Uterus (tissue), 4 donors: ENCODE measurements at regions of chr9 and their contacts with region 1.

Region 1: DNA sequence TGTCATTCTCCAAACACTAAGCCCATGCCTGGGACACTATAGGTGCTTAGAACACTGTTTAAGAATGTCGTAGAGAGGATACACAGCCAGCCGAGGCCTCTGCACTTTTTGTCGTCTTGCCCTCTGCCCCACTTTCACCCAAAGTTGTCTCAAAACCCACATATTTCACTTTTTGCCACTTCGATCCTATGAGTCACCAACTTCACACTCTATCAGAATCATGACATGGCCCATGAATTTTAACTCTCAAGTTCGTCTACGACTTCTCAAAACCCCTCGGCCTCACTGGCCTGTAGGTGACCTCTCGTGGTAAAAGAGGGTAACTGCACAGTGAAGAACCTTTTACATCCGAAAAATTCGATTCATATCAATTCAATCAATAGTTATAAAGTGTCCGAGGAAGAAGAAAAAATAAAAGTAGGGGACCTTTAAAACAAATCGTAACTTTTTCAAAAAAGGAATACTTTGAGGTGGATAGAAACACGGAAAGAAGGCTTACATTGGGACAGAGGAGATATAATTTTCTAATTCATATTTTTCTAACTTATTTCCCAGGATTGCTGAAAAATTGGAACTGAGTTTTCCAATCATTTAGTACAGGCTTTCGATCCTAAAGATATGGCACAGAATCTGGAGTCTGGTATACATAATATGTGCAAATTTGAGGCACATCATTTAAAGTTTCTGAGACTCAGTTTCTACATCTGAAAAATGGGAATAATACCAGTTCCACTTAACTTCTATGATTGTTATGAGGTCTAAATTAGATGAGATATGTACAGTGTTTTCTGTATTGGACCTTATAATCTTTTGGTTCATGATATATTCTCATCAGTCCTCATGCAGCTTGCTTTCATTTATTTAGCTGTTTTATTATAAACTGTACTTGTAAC is 122.6 kb downstream of the APBA1 start:
- DNase-seq: no peak
- H3K4me3 ChIP-seq: no peak overlapping the region
- H3K27ac ChIP-seq: no peak overlapping the region
- H3K4me1 ChIP-seq: no peaks in the 10 kb centered on the region
- H3K27me3 ChIP-seq: no peaks in the 10 kb centered on the region
- CTCF ChIP-seq: peak; percentile 67 to 76 (median 70)
- POLR2A ChIP-seq: no peak

Region 2: GRCh38 chr9:69421908-69422801 is 127.4 kb before region 1 on chr9:
- intact Hi-C with region 1: loop called (anchors 10 kb)
- DNase-seq: peak; percentile 47 to 56
- H3K4me3 ChIP-seq: no peak overlapping the region
- H3K27ac ChIP-seq: no peak overlapping the region
- H3K4me1 ChIP-seq: no peaks in the 10 kb centered on the region
- H3K27me3 ChIP-seq: no peaks in the 10 kb centered on the region
- CTCF ChIP-seq: peak; percentile 78 to 84 (median 80)
- POLR2A ChIP-seq: no peak

Region 3: GRCh38 chr9:69599232-69599971 is 49.8 kb after region 1 on chr9:
- intact Hi-C with region 1: no loop called
- DNase-seq: no peak
- H3K4me3 ChIP-seq: no peak overlapping the region
- H3K27ac ChIP-seq: no peak overlapping the region
- H3K4me1 ChIP-seq: no peaks in the 10 kb centered on the region
- H3K27me3 ChIP-seq: no peaks in the 10 kb centered on the region
- CTCF ChIP-seq: no peak
- POLR2A ChIP-seq: no peak

Region 4: DNA sequence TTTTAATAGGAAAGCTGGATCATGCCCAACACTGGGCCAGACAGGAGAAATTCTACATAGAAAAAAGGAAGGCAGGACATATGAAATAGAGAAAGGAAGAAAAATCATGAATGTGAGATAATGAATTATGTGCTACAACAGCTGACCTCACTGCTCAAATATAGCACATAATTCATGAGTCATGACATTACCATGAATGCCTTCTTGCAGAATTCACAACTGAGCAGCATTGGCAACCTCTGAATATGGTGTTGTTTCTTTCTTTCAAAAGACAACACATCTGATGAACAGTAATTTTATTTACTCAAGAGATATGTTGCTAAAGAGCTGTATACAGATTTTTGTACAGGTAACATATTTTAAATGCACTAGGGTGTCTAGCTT is 88.3 kb after region 1 on chr9:
- intact Hi-C with region 1: no loop called
- DNase-seq: no peak
- H3K4me3 ChIP-seq: no peak overlapping the region
- H3K27ac ChIP-seq: no peak overlapping the region
- H3K4me1 ChIP-seq: no peaks in the 10 kb centered on the region
- H3K27me3 ChIP-seq: no peaks in the 10 kb centered on the region
- CTCF ChIP-seq: no peak
- POLR2A ChIP-seq: no peak

Region 5: DNA sequence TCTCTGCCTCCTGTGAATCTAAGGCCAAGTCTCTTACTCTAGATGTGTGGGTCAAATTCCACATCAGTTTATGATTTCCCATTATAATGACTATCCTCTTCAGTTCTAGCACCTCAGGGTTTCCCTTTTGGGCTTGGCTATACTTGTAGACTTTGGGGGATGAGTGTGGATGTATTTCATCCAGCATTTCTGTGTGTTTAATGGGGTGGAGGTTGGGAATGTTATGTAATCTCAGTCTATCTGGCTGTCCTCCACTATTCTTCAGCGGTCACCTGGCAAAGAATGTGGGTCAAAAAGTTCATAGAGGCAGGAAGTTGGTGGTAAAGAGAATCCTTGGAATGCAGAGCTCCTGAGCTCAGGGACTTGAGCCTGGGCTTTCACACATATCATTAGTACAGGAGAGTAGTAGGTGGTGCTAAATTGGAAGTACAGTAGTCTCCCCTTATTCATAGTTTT is 335.9 kb after region 1 on chr9:
- intact Hi-C with region 1: no loop called
- DNase-seq: no peak
- H3K4me3 ChIP-seq: no peak overlapping the region
- H3K27ac ChIP-seq: no peak overlapping the region
- H3K4me1 ChIP-seq: no peaks in the 10 kb centered on the region
- H3K27me3 ChIP-seq: no peaks in the 10 kb centered on the region
- CTCF ChIP-seq: no peak
- POLR2A ChIP-seq: no peak